Left cardiac atrium (tissue), 4 donors: ENCODE measurements at regions of chr1 and their contacts with region 1.

Region 1: DNA sequence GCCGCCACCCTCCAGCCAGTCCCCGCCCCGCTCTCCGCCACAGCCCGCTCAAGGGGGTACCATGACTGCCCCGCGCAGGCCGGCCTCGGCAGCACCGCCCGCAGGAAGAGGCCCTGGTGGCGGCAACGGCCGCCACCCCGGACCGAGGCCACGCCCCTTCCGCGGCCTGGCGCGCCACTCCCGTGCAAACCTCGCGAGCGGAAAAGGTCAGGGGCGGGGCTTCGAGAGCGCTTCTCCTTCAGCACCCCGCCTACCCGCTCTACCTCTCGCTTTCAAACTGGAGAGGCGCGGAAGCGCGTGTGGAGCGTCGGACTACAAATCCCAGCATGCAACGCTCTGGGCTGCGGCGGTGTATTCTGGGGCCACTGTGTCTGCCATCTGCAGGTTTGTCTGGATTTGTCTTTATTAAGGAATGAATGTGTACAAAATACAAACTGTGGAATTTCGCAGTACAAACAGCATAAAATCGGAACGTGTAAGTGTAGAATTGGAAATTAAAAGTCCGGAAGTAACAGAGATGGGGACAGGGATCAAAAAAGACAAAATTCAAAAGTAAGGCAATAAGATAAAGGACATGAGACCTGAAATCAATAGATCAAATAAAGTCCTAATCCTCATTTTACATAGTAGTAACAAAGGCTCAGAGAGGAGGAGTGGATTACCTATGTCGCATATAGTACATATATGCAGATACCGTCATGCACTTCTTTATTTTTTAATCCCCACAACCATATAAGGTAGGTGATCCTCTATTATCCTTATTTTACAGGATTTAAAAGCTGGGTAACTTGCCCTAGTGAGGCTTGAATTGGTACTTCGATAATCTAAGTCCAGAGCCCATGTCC is 464 bp upstream of the ADSS2 start:
- DNase-seq: peak; percentile 100
- ATAC-seq: peak; percentile 98

Region 2: DNA sequence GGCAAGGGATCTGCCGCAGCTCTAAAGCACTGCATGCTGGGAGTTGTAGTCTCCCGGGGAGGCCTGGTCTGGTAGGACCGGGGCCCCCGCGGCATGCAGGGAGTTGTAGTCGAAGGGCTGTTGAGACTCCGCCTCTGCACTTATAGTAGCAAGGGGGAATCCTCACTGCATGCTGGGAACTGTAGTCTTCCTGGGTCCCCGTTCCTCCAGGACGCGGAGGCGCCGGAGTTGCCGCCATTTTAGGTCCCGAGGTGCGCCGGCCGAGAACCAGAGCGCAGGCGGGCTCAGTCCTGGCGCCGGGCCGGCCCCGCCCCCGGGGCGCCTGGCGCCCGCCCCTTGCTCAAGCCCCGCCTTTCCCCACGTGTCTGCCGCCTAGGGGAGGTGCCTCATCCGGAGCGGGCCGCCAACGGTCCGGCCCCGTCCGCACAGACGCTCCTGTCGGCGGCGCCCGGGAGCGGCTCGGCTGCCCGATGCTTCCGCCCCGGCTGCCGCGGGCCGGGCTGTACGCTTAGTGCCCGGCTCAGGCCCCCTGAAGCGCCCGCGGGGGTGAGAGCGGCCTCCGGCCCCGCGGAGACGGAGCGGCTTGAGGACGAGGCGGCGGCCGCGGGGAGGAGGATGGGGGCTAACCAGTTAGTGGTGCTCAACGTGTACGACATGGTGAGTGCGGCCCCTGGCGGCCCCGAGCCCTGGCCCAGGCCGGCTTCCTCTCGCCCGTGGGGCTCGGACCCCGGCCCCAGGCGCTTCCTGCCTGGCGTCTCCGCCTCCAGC is 200.7 kb after region 1 on chr1 and contains the start of gene DESI2:
- intact Hi-C with region 1: loop called in 1 of 2 experiments (anchors 10 kb)
- DNase-seq: peak; percentile 99
- ATAC-seq: peak; percentile 97
- total RNA-seq, gene DESI2: 20.0 to 22.2 TPM